ENCODE measurements at regions of chr14 and their contacts with region 1.

Region 1: DNA sequence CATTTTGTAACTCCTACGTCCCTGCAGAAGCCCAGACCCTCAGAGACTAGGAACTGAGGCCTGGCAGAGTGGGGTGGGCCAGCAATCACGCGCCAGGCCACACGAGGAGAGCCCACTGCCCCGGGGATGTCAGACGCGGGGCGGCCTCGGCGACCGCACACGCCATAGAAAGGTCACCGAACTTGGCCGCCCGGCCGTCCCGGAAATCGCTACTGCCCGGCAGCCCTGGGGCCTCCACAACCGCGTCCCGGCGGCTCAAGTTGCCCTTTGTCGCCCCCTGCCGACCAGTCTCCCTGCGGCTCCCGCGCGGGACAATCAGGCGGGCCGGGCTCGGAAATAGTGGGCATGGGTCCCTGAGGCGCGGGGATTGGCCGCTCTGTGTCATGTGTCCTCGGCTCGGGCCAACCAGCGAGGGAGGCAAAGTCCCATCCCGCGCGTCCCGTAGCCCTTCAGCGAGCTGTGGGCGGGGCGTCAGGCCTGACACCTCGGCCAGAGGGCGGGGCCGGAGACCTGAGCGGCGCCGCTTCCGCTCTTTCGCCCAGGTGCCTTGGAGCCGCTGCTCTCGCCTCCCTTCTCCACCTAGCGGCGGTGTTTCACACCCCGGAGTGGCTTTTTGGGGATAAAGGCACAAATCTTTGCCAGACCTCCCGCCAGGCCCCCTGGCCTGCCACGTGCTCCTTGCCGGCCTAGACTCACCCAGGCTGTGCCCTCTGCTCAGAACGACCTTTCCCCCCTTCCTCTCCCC is 33.4 kb upstream of the DEGS2 start:
- DNase-seq: peak; percentile 100
- H3K4me3 Mint-ChIP-seq: peak overlapping the region; percentile 75
- H3K27ac Mint-ChIP-seq: peak overlapping the region; percentile 94
- H3K4me1 Mint-ChIP-seq: peaks cover 10% of the 10 kb centered on the region
- H3K27me3 Mint-ChIP-seq: no peaks in the 10 kb centered on the region

Region 2: GRCh38 chr14:99683619-99684355 is 509.1 kb before region 1 on chr14 and contains the start of gene CYP46A1:
- CTCF ChIA-PET with region 1: no interaction called
- intact Hi-C with region 1: loop called (anchors 1 kb)
- DNase-seq: peak; percentile 100
- H3K4me3 Mint-ChIP-seq: peak within 1 kb of the TSS; percentile 87
- H3K27ac Mint-ChIP-seq: peak within 1 kb of the TSS; percentile 66
- H3K4me1 Mint-ChIP-seq: peaks cover 3% of the 10 kb centered on the region
- H3K27me3 Mint-ChIP-seq: peaks cover 4% of the 10 kb centered on the region
- total RNA-seq, gene CYP46A1: 0.10 to 0.12 TPM

Region 3: DNA sequence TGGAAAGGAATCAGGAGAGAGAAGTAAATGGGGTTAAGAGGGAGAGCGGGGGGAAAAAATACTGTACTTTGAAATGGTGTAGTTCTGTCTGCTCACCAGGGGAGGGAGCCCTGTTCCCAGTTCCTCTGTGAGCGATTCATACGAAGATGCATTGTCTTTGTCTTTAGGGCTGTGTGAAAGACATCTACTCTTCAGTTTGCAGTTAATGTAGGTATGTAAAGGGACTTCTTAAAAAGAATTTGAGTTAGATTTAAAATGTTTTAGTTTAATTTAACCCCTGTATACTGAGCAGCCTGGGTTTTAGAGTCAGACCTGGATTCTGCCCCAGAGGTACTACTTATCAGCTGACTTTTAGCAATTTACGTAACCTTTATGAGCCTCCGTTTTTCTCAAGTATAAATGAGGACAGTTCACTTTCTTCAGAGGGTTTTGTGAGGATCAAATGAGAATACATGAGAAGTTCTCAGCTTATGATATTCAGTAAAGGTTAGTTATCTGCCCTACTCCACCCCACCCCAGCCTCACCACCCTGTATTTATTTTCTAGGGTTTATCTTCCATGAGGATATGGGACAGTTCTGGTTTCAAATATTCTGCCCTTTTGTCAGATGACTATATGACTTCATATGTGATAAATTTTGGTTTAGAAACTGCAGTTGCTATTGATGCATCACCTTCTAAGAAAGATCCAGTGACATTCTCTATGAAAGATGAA is 210.2 kb before region 1 on chr14:
- CTCF ChIA-PET with region 1: interaction called, 39 read pairs
- intact Hi-C with region 1: loop called (anchors 1 kb)
- DNase-seq: peak; percentile 76
- H3K4me3 Mint-ChIP-seq: no peak overlapping the region
- H3K27ac Mint-ChIP-seq: no peak overlapping the region
- H3K4me1 Mint-ChIP-seq: peaks cover 18% of the 10 kb centered on the region
- H3K27me3 Mint-ChIP-seq: no peaks in the 10 kb centered on the region

Region 4: GRCh38 chr14:100067971-100068959 is 124.6 kb before region 1 on chr14:
- CTCF ChIA-PET with region 1: interaction called, 38 read pairs
- intact Hi-C with region 1: loop called (anchors 1 kb)
- DNase-seq: peak; percentile 92
- H3K4me3 Mint-ChIP-seq: peak overlapping the region; percentile 83
- H3K27ac Mint-ChIP-seq: peak overlapping the region; percentile 100
- H3K4me1 Mint-ChIP-seq: peaks cover 74% of the 10 kb centered on the region
- H3K27me3 Mint-ChIP-seq: no peaks in the 10 kb centered on the region

Region 5: GRCh38 chr14:100213956-100214774 is 21.3 kb after region 1 on chr14:
- CTCF ChIA-PET with region 1: interaction called, 19 read pairs
- intact Hi-C with region 1: loop called (anchors 1 kb)
- DNase-seq: peak; percentile 92
- H3K4me3 Mint-ChIP-seq: peak overlapping the region; percentile 79
- H3K27ac Mint-ChIP-seq: peak overlapping the region; percentile 86
- H3K4me1 Mint-ChIP-seq: peaks cover 24% of the 10 kb centered on the region
- H3K27me3 Mint-ChIP-seq: no peaks in the 10 kb centered on the region

Region 6: GRCh38 chr14:100239840-100240724 is 47.2 kb after region 1 on chr14:
- CTCF ChIA-PET with region 1: interaction called, 15 read pairs
- intact Hi-C with region 1: loop called (anchors 1 kb)
- DNase-seq: peak; percentile 88
- H3K4me3 Mint-ChIP-seq: peak overlapping the region; percentile 86
- H3K27ac Mint-ChIP-seq: peak overlapping the region; percentile 88
- H3K4me1 Mint-ChIP-seq: peaks cover 52% of the 10 kb centered on the region
- H3K27me3 Mint-ChIP-seq: no peaks in the 10 kb centered on the region